Caki2 (cell line): ENCODE measurements at regions of chr20 and their contacts with region 1.

Region 1: DNA sequence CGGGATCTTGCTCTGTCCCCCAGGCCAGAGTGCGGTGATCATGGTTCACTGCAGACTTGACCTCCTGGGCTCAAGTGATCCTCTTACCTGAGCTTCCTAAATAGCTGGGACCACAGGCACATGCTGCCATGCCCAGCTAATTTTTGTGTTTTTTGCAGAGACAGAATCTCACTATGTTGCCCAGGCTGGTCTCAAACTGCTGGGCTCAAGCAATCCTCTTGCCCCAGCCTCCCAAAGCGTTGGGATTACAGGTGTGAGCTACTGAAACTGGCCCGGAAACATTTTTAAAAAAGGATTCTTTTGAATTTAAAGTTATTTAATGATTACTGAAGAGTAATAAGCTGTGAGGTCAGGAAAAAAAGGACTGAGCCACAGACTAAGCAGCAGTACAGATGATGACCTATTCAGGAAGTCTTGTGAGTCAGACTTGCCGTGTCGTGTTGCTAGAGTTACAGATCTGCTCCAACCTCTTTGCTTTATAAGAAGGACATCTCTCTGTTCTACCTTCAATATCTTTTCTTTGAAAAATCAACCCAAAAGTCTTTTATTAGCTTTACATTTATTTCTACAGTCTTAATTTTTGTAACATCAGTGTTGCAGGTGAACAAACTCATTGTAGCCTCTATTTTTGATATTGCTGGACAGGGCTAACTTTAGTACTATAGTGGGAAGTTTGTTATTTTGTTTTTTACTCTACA is 108.7 kb downstream of the NCOA3 start:
- DNase-seq: peak; percentile 76

Region 2: GRCh38 chr20:47501483-47502270 is 108.7 kb before region 1 on chr20 and contains the start of gene NCOA3:
- in situ Hi-C with region 1: loop called (anchors 10 kb)
- DNase-seq: peak; percentile 96
- total RNA-seq, gene NCOA3: 26.5 and 30.2 TPM in 2 replicates

Region 3: GRCh38 chr20:47735412-47736400 is 125.3 kb after region 1 on chr20:
- in situ Hi-C with region 1: no loop called
- DNase-seq: no peak